Ovary (tissue), 10 donors: ENCODE measurements at regions of chr4 and their contacts with region 1.

Region 1: DNA sequence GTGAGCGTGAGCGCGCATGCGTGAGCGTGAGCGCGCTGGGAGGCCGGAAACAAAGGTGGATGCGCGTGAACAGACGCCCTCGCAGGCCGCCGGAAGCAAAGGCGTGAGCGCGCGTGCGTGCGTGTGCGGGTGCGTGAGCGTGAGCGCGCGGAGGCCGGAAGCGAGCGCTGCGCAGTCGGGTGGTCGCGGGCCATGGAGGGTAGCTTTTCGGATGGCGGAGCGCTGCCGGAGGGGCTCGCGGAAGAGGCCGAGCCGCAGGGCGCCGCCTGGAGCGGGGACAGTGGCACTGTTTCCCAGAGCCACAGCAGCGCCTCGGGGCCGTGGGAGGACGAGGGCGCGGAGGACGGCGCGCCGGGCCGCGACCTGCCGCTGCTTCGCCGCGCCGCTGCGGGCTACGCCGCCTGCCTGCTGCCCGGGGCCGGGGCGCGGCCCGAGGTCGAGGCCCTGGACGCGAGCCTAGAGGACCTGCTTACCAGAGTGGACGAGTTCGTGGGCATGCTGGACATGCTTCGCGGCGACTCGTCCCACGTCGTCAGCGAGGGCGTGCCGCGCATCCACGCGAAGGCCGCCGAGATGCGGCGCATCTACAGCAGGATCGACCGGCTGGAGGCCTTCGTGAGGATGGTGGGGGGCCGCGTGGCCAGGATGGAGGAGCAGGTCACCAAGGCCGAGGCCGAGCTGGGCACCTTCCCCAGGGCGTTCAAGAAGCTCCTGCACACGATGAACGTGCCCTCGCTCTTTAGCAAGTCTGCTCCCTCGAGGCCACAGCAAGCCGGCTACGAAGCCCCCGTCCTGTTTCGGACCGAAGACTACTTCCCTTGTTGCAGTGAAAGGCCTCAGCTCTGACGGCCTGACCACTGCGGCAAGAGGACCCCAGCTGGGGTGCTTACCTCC is at the start of gene BLOC1S4:
- DNase-seq: peak; percentile 86 to 93 (median 90)
- H3K4me3 ChIP-seq: peak within 1 kb of the TSS; percentile 74
- H3K27ac ChIP-seq: peak within 1 kb of the TSS; percentile 74 to 95
- H3K4me1 ChIP-seq: peaks cover 7% of the 10 kb centered on the region
- H3K27me3 ChIP-seq: no peaks in the 10 kb centered on the region
- CTCF ChIP-seq: peak in 2 of 3 donors; percentile 35 to 53
- EP300 ChIP-seq: no peak
- POLR2A ChIP-seq: peak; percentile 89
- total RNA-seq, gene BLOC1S4: 15.4 to 26.9 (median 18.9) TPM

Region 2: GRCh38 chr4:6783053-6783981 is 67.1 kb after region 1 on chr4:
- intact Hi-C with region 1: loop called in 1 of 4 experiments (anchors 5 kb)
- DNase-seq: peak; percentile 93 to 95 (median 94)
- H3K4me3 ChIP-seq: peak overlapping the region; percentile 99
- H3K27ac ChIP-seq: peak overlapping the region; percentile 99
- H3K4me1 ChIP-seq: no peaks in the 10 kb centered on the region
- H3K27me3 ChIP-seq: no peaks in the 10 kb centered on the region
- CTCF ChIP-seq: no peak
- EP300 ChIP-seq: no peak
- POLR2A ChIP-seq: peak; percentile 83

Region 3: DNA sequence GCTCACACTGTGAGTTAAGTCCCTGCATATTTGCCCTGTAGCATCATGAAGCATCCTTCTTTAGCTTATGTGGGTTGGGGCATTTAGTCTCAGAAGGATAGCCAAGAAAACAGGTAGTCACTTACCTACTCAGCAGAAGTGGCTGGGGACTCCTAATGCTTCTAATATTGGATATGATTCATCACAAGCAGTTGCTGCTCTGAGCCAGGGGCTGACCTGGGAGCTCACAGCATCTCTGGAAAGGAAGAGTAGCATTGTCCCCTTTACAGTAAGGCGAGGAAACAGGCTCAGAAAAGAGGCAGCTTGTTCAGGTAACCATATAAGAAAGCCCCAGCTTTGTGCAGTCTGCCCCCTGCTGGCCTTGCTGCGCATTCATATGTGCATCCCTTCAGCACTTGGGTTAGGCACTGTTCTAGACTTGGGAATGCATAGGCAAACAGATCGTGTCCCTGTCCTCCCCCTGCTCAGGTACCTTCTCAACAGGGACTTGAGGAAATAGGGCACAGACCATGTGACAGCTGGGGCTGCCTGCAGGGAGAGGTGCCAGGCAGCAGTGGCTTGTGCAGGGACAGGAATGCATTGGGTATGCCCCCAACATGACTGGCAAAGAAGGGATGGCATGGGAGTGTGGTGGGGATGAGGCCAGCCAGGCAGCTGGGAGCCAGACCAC is 157.7 kb after region 1 on chr4:
- intact Hi-C with region 1: loop called (anchors 2 to 5 kb)
- DNase-seq: peak; percentile 62 to 82 (median 74)
- H3K4me3 ChIP-seq: no peak overlapping the region
- H3K27ac ChIP-seq: no peak overlapping the region
- H3K4me1 ChIP-seq: no peaks in the 10 kb centered on the region
- H3K27me3 ChIP-seq: no peaks in the 10 kb centered on the region
- CTCF ChIP-seq: peak; percentile 48 to 69 (median 61)
- EP300 ChIP-seq: no peak
- POLR2A ChIP-seq: no peak

Region 4: GRCh38 chr4:7067452-7068278 is 351.4 kb after region 1 on chr4 and contains the start of gene GRPEL1:
- intact Hi-C with region 1: loop called in 3 of 4 experiments (anchors 2 to 10 kb)
- DNase-seq: peak; percentile 99 to 100 (median 100)
- H3K4me3 ChIP-seq: peak within 1 kb of the TSS; percentile 78
- H3K27ac ChIP-seq: peak within 1 kb of the TSS; percentile 38 to 84
- H3K4me1 ChIP-seq: peaks cover 9% of the 10 kb centered on the region
- H3K27me3 ChIP-seq: no peaks in the 10 kb centered on the region
- CTCF ChIP-seq: peak in 1 of 3 donors; percentile 22
- EP300 ChIP-seq: peak; percentile 16
- POLR2A ChIP-seq: peak; percentile 88
- total RNA-seq, gene GRPEL1: 11.1 to 37.0 (median 23.3) TPM